ENCODE measurements at regions of chr9 and their contacts with region 1.

Region 1: GRCh38 chr9:97398999-97399758 is 12.7 kb upstream of the TDRD7 start:
- DNase-seq: peak; percentile 35 to 75 (median 51)
- ATAC-seq: peak; percentile 88
- H3K4me3 ChIP-seq: no peak overlapping the region
- H3K4me3 Mint-ChIP-seq: peak overlapping the region in 1 of 10 donors; percentile 49
- H3K27ac ChIP-seq: no peak overlapping the region
- H3K27ac Mint-ChIP-seq: peak overlapping the region in 1 of 9 donors; percentile 72
- H3K4me1 ChIP-seq: no peaks in the 10 kb centered on the region
- H3K4me1 Mint-ChIP-seq: peaks cover 0 to 27% (median 0%) of the 10 kb centered on the region in 7 donors
- H3K27me3 ChIP-seq: no peaks in the 10 kb centered on the region
- H3K27me3 Mint-ChIP-seq: peaks cover 5 to 44% (median 6%) of the 10 kb centered on the region in 5 donors

Region 2: DNA sequence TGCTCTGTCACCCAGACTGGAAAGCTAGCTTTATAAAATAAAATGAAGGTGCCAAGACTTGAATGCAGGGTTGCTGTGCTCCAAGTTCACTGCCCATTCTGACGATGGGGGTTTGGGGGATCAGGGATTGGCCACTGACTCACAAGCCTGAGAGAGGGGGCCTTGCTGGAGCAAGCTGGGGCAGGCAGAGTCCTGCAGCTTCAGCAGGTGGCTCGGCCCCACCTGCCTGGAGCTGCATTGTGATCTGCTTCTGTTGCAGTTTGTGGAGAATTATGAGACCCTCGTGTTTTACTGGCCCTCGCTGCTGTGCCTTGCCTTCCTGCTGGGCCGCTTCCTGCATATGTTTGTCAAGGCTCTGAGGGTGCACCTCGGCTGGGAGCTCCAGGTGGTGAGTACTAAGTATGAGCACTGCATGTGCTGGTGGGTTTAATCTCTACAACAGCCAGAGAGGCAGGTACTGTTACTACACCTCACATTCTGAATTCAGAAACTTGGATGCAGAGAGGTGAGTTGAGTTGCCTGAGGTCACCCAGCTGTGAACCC is 122.8 kb before region 1 on chr9:
- CTCF ChIA-PET with region 1: no interaction called
- POLR2A ChIA-PET with region 1: no interaction called
- intact Hi-C with region 1: no loop called
- DNase-seq: no peak
- ATAC-seq: no peak
- H3K4me3 ChIP-seq: no peak overlapping the region
- H3K4me3 Mint-ChIP-seq: no peak overlapping the region
- H3K27ac ChIP-seq: no peak overlapping the region
- H3K27ac Mint-ChIP-seq: no peak overlapping the region
- H3K4me1 ChIP-seq: no peaks in the 10 kb centered on the region
- H3K4me1 Mint-ChIP-seq: peaks cover 0 to 15% (median 2%) of the 10 kb centered on the region in 7 donors
- H3K27me3 ChIP-seq: no peaks in the 10 kb centered on the region
- H3K27me3 Mint-ChIP-seq: no peaks in the 10 kb centered on the region

Region 3: DNA sequence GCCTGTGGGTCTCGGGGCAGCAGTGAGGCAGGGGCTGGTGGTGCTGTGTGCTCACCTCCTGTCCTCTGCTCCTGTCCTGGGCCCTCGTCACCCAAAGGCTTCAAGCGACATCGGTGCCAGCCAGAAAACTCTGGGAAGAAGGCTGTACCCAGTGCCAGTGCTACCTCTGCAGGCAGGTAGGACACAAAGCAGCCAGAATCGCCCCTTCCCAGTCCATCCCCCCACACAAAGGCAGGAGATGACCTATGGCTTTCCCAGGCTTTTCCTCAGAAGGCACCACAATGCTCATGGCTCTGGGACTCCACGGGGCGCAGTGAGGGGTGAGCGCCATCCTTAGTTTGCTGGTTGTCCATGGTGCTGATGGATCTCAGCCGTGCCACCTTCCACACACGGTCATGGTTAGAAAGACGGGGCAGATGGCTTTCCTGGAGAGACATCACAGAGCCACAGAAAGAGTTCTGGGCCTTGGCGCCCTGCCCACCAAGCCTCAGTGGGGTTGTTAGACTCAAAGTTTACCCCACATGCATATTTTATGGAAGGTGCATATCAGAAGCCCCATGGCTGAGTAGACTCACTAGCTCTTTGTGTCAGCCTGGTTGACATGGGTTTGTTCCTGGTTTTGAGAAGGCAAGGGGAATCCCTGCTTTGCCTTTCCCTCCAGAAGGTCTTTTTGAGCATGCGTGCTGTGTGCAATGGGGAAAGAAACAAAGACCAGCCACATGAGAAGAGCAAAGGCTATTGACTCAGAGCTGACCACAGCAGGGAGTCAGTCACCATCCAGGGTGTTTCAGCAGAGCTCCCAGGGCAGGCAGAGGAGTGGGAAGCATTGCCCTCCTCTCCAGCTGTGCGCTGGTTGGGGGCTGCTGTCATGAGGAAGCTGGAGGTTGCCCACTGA is 36.7 kb before region 1 on chr9:
- CTCF ChIA-PET with region 1: no interaction called
- POLR2A ChIA-PET with region 1: no interaction called
- intact Hi-C with region 1: no loop called
- DNase-seq: no peak
- ATAC-seq: no peak
- H3K4me3 ChIP-seq: no peak overlapping the region
- H3K4me3 Mint-ChIP-seq: no peak overlapping the region
- H3K27ac ChIP-seq: no peak overlapping the region
- H3K27ac Mint-ChIP-seq: peak overlapping the region in 1 of 9 donors; percentile 8
- H3K4me1 ChIP-seq: no peaks in the 10 kb centered on the region
- H3K4me1 Mint-ChIP-seq: peaks cover 0 to 7% (median 1%) of the 10 kb centered on the region in 7 donors
- H3K27me3 ChIP-seq: no peaks in the 10 kb centered on the region
- H3K27me3 Mint-ChIP-seq: no peaks in the 10 kb centered on the region

Region 4: GRCh38 chr9:97386733-97387503 is 12.3 kb before region 1 on chr9:
- CTCF ChIA-PET with region 1: interaction called, 3 read pairs
- POLR2A ChIA-PET with region 1: no interaction called
- intact Hi-C with region 1: loop called (anchors 1 kb)
- DNase-seq: peak; percentile 39 to 83 (median 52)
- ATAC-seq: peak; percentile 66
- H3K4me3 ChIP-seq: no peak overlapping the region
- H3K4me3 Mint-ChIP-seq: no peak overlapping the region
- H3K27ac ChIP-seq: no peak overlapping the region
- H3K27ac Mint-ChIP-seq: peak overlapping the region in 2 of 9 donors; percentile 38 to 49
- H3K4me1 ChIP-seq: no peaks in the 10 kb centered on the region
- H3K4me1 Mint-ChIP-seq: peaks cover 0 to 36% (median 5%) of the 10 kb centered on the region in 7 donors
- H3K27me3 ChIP-seq: no peaks in the 10 kb centered on the region
- H3K27me3 Mint-ChIP-seq: peaks cover 4 to 29% (median 13%) of the 10 kb centered on the region in 5 donors

Region 5: GRCh38 chr9:97419309-97419867 is 20.2 kb after region 1 on chr9:
- CTCF ChIA-PET with region 1: no interaction called
- POLR2A ChIA-PET with region 1: no interaction called
- intact Hi-C with region 1: no loop called
- DNase-seq: no peak
- ATAC-seq: no peak
- H3K4me3 ChIP-seq: no peak overlapping the region
- H3K4me3 Mint-ChIP-seq: no peak overlapping the region
- H3K27ac ChIP-seq: no peak overlapping the region
- H3K27ac Mint-ChIP-seq: no peak overlapping the region
- H3K4me1 ChIP-seq: no peaks in the 10 kb centered on the region
- H3K4me1 Mint-ChIP-seq: peaks cover 6 to 49% (median 34%) of the 10 kb centered on the region in 7 donors
- H3K27me3 ChIP-seq: no peaks in the 10 kb centered on the region
- H3K27me3 Mint-ChIP-seq: no peaks in the 10 kb centered on the region

Region 6: GRCh38 chr9:97459099-97459725 is 60.0 kb after region 1 on chr9:
- CTCF ChIA-PET with region 1: no interaction called
- POLR2A ChIA-PET with region 1: no interaction called
- intact Hi-C with region 1: no loop called
- DNase-seq: no peak
- ATAC-seq: no peak
- H3K4me3 ChIP-seq: no peak overlapping the region
- H3K4me3 Mint-ChIP-seq: no peak overlapping the region
- H3K27ac ChIP-seq: no peak overlapping the region
- H3K27ac Mint-ChIP-seq: no peak overlapping the region
- H3K4me1 ChIP-seq: no peaks in the 10 kb centered on the region
- H3K4me1 Mint-ChIP-seq: peaks cover 0 to 4% (median 0%) of the 10 kb centered on the region in 7 donors
- H3K27me3 ChIP-seq: no peaks in the 10 kb centered on the region
- H3K27me3 Mint-ChIP-seq: no peaks in the 10 kb centered on the region